ENCODE measurements at regions of chr14 and their contacts with region 1.

Region 1: DNA sequence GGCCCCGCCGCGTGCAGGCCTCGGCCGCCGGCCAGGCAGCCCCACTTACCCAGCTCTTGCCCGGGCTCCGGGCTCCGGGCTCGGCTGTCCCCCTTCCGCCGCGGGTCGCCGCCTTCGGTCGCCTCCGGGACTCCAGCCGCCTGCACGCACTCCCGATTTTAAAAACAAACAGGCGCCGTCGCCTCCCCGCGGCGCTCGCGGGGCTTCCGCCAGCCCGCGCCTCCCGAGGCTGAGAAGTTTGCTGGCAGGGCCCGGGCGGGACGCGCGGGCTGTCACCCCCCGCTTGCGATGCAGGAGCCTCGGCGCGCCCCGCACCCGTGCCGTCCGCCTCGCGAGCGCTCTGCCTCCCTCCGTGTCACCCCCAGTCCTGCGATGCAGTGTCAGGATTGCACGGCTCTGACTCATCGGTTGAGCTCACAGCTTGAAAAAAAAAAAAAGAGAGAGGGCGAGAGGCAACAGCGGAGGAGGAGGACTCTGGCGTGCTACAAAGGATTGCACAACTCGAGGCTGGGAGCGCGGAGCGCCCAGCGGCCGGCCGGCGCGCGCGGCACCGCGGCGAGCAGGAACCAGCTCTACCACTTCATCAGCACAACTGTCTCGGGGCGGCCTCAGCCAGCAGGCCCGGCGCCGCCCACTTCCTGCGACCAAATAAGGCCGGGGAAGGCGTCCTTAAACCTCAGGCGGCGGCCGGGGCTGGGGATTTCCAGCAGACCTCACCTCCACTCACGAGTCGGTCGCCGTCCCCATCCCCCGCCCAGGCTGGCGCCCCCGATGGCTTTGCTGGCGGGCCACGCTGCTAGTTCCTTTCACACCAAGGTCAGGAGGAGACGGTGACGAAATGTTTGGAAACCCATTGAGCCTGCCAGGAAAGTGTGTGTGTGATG is 45.8 kb upstream of the PNMA1 start:
- DNase-seq: peak; percentile 84 to 94
- H3K4me3 ChIP-seq: peak overlapping the region; percentile 55 to 74 (median 66)
- H3K27ac ChIP-seq: peak overlapping the region; percentile 69; the same call in 1 of the 2 replicates
- H3K4me1 ChIP-seq: peaks cover 11 to 35% (median 14%) of the 10 kb centered on the region in 4 experiments
- H3K27me3 ChIP-seq: peaks cover 0 to 15% (median 10%) of the 10 kb centered on the region in 4 experiments; a peak in 5 of 7 replicates
- CTCF ChIP-seq: no peak
- EP300 ChIP-seq: no peak
- POLR2A ChIP-seq: peak; percentile 85 to 93
- RAD21 ChIP-seq: no peak

Region 2: GRCh38 chr14:73741386-73741875 is 18.5 kb before region 1 on chr14:
- CTCF ChIA-PET with region 1: interaction called, 198 read pairs
- POLR2A ChIA-PET with region 1: interaction called, 13 read pairs
- DNase-seq: peak; percentile 47 to 74
- H3K4me3 ChIP-seq: peak overlapping the region in 3 of 4 experiments; percentile 1 to 43 (median 19); a peak in 4 of 8 replicates
- H3K27ac ChIP-seq: peak overlapping the region; percentile 31; the same call in 1 of the 2 replicates
- H3K4me1 ChIP-seq: peaks cover 6 to 41% (median 30%) of the 10 kb centered on the region in 4 experiments
- H3K27me3 ChIP-seq: no peaks in the 10 kb centered on the region
- CTCF ChIP-seq: no peak
- EP300 ChIP-seq: no peak
- POLR2A ChIP-seq: no peak
- RAD21 ChIP-seq: no peak

Region 3: DNA sequence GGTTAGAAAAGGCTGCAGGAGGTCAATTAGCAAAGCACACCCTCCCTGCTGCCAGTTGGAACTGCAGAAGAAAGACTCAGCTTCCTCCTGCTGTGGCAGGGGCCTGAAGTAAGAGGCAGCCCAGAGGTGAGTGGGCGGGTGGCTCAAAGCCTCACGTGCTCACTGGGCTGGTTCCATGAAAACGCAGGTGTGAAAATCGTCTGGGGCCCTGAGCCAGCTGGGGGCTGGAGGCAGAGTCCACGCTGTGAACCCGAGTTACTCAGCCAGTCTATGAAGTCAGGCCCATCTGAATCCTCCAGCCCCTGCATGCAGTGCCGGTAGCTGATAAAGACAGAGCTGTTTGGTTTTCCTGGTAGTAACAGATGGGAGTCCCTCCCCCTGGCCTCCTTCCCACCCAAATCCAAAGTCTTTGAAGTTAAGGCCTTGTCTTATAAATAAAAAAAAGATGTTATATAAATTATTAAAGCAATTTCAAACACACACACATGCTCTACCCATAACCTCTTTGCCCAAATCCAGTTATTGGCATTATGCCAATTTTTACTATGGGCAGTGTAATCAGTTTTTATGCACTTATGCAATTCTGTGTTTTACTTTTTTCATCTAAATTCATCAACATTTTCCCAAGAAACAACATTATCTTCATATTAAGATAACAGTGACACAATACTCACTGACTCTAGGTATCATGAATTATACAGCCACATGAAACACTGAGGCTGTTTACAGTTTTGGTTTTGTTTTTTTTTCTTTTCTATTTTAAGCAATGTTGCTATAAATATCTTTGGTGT is 12.1 kb after region 1 on chr14:
- CTCF ChIA-PET with region 1: interaction called, 24 read pairs
- POLR2A ChIA-PET with region 1: interaction called, 17 read pairs
- DNase-seq: peak; percentile 43 to 71
- H3K4me3 ChIP-seq: peak overlapping the region in 1 of 4 experiments; percentile 4; a peak in 1 of 8 replicates
- H3K27ac ChIP-seq: no peak overlapping the region
- H3K4me1 ChIP-seq: peaks cover 5 to 22% (median 8%) of the 10 kb centered on the region in 4 experiments; a peak in 5 of 7 replicates
- H3K27me3 ChIP-seq: peaks cover 0 to 28% (median 12%) of the 10 kb centered on the region in 4 experiments; a peak in 4 of 7 replicates
- CTCF ChIP-seq: no peak
- EP300 ChIP-seq: no peak; a peak in 1 of 3 replicates
- POLR2A ChIP-seq: no peak
- RAD21 ChIP-seq: no peak

Region 4: GRCh38 chr14:73785873-73786695 is 26.1 kb after region 1 on chr14:
- CTCF ChIA-PET with region 1: interaction called, 18 read pairs
- POLR2A ChIA-PET with region 1: interaction called, 26 read pairs
- DNase-seq: peak in 1 of 2 experiments; percentile 62
- H3K4me3 ChIP-seq: peak overlapping the region; percentile 42 to 75 (median 71)
- H3K27ac ChIP-seq: no peak overlapping the region
- H3K4me1 ChIP-seq: peaks cover 7 to 21% (median 13%) of the 10 kb centered on the region in 4 experiments; a peak in 6 of 7 replicates
- H3K27me3 ChIP-seq: peaks cover 20 to 78% (median 62%) of the 10 kb centered on the region in 4 experiments
- CTCF ChIP-seq: peak in 1 of 3 experiments; percentile 2; a peak in 1 of 4 replicates
- EP300 ChIP-seq: no peak
- POLR2A ChIP-seq: no peak
- RAD21 ChIP-seq: no peak

Measured in H1 (cell line).